GM18951 (cell line): ENCODE measurements at regions of chr17 and their contacts with region 1.

Region 1: GRCh38 chr17:35011671-35012210 is 31.4 kb downstream of the LIG3 start:
- POLR2A ChIP-seq: no peak

Region 2: GRCh38 chr17:34865732-34866131 is 146.0 kb before region 1 on chr17:
- in situ Hi-C with region 1: no loop called
- POLR2A ChIP-seq: no peak

Region 3: DNA sequence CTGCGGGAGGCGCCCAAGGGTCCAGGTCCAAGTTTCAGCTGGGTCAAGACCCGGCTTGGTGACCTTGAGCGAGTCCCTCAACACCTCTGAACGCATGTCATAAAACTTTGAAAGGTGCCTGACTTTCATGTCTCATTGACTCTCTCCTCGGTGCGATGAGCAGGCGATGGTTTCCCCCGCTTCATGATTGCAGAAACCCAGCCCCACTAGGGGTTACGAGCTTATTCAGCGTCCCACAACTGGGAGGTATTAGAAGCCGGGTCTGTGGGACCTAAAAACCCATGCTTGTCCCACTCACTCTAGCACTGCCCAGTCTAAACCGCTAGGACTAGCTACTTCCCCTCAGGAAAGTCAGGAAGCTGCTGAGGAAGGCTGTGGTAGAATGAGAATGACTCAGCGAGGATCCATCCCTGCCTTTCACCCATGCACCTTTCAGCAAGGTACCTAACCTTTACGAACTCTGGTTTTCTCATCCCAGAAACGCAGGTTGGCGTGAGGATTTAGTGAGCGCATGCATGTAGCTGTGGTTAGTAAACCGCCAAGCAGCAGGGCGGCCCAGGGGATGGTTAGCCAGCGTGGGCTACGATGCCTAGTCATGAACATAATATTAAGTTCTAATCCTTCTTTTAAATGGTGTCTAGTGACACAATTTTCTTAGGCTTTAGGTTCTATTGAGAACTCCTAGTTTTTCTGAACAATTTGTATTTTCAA is 78.0 kb after region 1 on chr17:
- in situ Hi-C with region 1: loop called (anchors 10 kb)
- POLR2A ChIP-seq: no peak